ENCODE measurements at regions of chr3 and their contacts with region 1.

Region 1: DNA sequence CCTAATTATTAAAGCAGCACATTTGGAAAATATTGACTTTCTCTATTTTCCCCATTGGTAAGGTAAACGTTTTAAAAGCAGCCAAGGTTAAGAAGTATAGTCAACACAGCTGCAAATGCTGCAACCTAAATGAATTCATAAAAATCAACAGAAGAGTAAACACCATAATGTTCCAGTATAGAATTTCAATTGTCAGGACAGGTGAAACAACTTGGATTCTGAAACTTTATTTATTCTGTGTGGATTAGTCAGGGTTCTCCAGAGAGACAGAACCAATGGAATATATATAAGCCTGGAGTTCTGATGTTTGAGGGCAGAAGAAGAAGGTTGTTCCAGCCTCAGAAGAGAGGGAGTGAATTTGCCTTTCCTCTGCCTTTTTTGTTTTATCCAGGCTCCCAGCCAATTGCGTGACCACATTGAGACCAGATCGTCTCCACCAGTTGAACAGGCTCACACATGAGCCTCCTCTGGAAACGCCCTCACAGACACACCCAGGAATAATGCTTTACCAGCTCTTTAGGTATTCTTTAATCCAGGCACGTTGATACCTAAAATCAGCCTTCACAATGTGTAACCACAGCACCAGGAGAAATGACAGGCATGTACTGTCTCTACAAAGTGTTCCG is 923.2 kb downstream of the TBL1XR1 start:
- DNase-seq: peak; percentile 55
- ATAC-seq: peak; percentile 77
- H3K4me3 ChIP-seq: no peak overlapping the region
- H3K27ac ChIP-seq: peak overlapping the region; percentile 16; the same call in 1 of the 2 replicates
- H3K4me1 ChIP-seq: peaks cover 10% of the 10 kb centered on the region; the same call in 1 of the 2 replicates
- H3K27me3 ChIP-seq: no peaks in the 10 kb centered on the region
- CTCF ChIP-seq: no peak

Region 2: GRCh38 chr3:175969456-175969855 is 304.6 kb before region 1 on chr3:
- CTCF ChIA-PET with region 1: no interaction called
- POLR2A ChIA-PET with region 1: no interaction called
- intact Hi-C with region 1: no loop called
- DNase-seq: no peak
- ATAC-seq: no peak
- H3K4me3 ChIP-seq: no peak overlapping the region
- H3K27ac ChIP-seq: no peak overlapping the region
- H3K4me1 ChIP-seq: no peaks in the 10 kb centered on the region
- H3K27me3 ChIP-seq: no peaks in the 10 kb centered on the region
- CTCF ChIP-seq: no peak

Region 3: GRCh38 chr3:176167245-176167644 is 106.8 kb before region 1 on chr3:
- CTCF ChIA-PET with region 1: no interaction called
- POLR2A ChIA-PET with region 1: no interaction called
- intact Hi-C with region 1: loop called (anchors 1 kb)
- DNase-seq: peak; percentile 98
- ATAC-seq: peak; percentile 87
- H3K4me3 ChIP-seq: no peak overlapping the region
- H3K27ac ChIP-seq: peak overlapping the region; percentile 46
- H3K4me1 ChIP-seq: peaks cover 21% of the 10 kb centered on the region
- H3K27me3 ChIP-seq: no peaks in the 10 kb centered on the region
- CTCF ChIP-seq: no peak

Region 4: DNA sequence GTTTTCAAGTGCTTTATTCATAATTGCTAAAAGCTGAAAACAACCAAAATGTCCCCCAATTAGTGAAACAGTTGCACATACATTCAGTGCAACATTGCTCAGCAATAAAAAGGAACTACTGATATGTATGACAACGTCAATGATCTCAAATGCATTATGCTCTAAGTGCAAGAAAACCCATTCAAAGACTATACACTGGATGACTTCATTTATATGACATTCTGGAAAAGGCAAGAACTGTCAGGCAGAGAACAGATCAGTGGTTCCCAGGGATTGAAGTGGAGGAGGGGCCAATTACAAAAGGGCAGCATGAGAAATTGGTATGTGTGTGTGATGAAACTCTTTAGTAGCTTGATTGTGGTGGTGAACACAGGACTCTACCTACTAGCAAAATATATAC is 337.7 kb after region 1 on chr3:
- CTCF ChIA-PET with region 1: no interaction called
- POLR2A ChIA-PET with region 1: no interaction called
- intact Hi-C with region 1: no loop called
- DNase-seq: no peak
- ATAC-seq: no peak
- H3K4me3 ChIP-seq: no peak overlapping the region
- H3K27ac ChIP-seq: no peak overlapping the region
- H3K4me1 ChIP-seq: peaks cover 6% of the 10 kb centered on the region
- H3K27me3 ChIP-seq: no peaks in the 10 kb centered on the region
- CTCF ChIP-seq: no peak